Panc1 (cell line): ENCODE measurements at regions of chr5 and their contacts with region 1.

Region 1: GRCh38 chr5:170278611-170279452 is 18.7 kb downstream of the LCP2 start:
- DNase-seq: no peak
- ATAC-seq: peak; percentile 20; the same call in 1 of the 2 replicates
- H3K4me3 ChIP-seq: no peak overlapping the region
- H3K27ac ChIP-seq: no peak overlapping the region
- H3K4me1 ChIP-seq: no peaks in the 10 kb centered on the region
- H3K27me3 ChIP-seq: no peaks in the 10 kb centered on the region; the same call in 1 of the 2 replicates
- CTCF ChIP-seq: no peak

Region 2: DNA sequence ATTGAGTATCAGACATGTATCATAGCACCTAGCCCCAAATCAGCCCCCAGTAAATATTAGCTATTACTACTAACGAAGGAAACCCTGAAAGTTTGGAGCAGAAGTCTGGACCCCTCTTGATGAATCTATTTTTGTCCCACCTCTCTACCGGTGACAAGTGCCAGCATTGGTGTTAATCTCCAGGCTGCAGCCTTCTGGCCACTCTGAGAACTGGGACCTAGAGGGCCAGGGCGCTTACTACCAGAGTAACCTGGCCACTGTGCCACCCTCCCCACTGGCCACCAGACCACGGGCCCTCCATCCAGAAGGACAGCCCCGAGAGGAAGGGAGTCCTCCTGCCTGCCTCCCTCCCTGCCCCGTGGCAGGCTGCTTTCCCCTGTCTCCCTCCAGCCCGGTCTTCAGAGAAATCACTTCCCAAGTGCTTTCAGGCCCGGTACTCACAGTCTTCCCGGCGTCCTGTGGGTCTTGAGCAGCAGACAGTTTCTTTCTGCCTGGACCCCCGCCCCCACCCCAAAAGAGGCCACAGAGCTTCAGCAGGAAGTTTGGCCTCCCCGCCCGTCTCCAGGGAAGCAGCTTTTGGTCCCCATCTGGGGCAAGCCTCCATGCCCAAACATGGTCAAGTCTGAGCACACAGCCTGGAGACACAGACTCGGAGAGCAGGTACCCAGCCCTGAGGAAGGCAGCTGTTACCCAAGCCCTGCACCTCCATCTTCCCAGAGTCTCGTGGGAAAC is 110.2 kb after region 1 on chr5 and contains the start of gene KCNMB1:
- CTCF ChIA-PET with region 1: no interaction called
- POLR2A ChIA-PET with region 1: interaction called, 17 read pairs
- in situ Hi-C with region 1: no loop called
- intact Hi-C with region 1: no loop called
- DNase-seq: no peak
- ATAC-seq: 0 out of 2 replicates have a peak, but pooled peaks have one; percentile 34
- H3K4me3 ChIP-seq: no peak within 1 kb of the TSS
- H3K27ac ChIP-seq: no peak within 1 kb of the TSS
- H3K4me1 ChIP-seq: no peaks in the 10 kb centered on the region
- H3K27me3 ChIP-seq: peaks cover 2% of the 10 kb centered on the region
- CTCF ChIP-seq: no peak
- total RNA-seq, gene KCNMB1: not detected